Caco-2 (cell line): ENCODE measurements at regions of chr3 and their contacts with region 1.

Region 1: DNA sequence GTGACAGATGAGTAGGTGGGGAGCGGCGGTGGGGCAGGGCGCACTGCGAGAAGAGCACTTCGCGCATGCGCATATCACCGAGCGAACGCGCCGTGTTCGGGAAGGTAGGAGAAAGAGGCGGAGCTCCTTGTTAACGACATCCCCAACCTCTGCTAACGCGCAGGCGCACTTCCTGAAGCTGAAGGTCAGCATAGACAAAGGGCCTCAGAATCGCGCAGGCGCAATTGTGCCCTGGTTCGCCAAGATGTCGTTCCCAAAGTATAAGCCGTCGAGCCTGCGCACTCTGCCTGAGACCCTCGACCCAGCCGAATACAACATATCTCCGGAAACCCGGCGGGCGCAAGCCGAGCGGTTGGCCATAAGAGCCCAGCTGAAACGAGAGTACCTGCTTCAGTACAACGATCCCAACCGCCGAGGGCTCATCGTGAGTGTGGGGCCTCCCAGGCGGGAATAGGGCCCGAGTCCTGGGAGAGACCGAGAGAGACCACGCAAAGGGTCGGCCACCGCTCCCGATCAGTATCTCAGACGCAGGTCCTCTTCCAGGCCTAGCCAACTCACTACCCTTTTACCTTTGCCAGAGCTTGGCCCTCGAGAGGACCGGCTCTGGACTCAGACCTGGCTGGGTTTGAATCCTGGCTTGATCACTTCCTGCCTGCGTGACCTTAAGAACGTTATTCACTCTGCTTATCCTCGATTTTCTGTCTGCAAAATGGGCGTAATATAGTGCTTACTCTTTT is at the start of gene NDUFB4:
- DNase-seq: peak; percentile 95 to 98
- H3K4me3 ChIP-seq: peak within 1 kb of the TSS; percentile 74
- H3K4me3 Mint-ChIP-seq: peak within 1 kb of the TSS; percentile 87
- H3K27ac Mint-ChIP-seq: peak within 1 kb of the TSS; percentile 82
- H3K4me1 ChIP-seq: no peaks in the 10 kb centered on the region
- H3K4me1 Mint-ChIP-seq: no peaks in the 10 kb centered on the region
- H3K27me3 ChIP-seq: no peaks in the 10 kb centered on the region
- H3K27me3 Mint-ChIP-seq: peaks cover 5% of the 10 kb centered on the region
- CTCF ChIP-seq: no peak
- total RNA-seq, gene NDUFB4: 133 and 136 TPM in 2 replicates

Region 2: GRCh38 chr3:120567370-120568201 is 28.7 kb before region 1 on chr3:
- CTCF ChIA-PET with region 1: interaction called, 13 read pairs
- POLR2A ChIA-PET with region 1: no interaction called
- intact Hi-C with region 1: no loop called
- DNase-seq: peak in 1 of 2 experiments; percentile 29
- H3K4me3 ChIP-seq: no peak overlapping the region
- H3K4me3 Mint-ChIP-seq: peak overlapping the region; percentile 63
- H3K27ac Mint-ChIP-seq: peak overlapping the region; percentile 11
- H3K4me1 ChIP-seq: no peaks in the 10 kb centered on the region
- H3K4me1 Mint-ChIP-seq: no peaks in the 10 kb centered on the region
- H3K27me3 ChIP-seq: no peaks in the 10 kb centered on the region
- H3K27me3 Mint-ChIP-seq: no peaks in the 10 kb centered on the region
- CTCF ChIP-seq: peak; percentile 27 to 36

Region 3: GRCh38 chr3:120678331-120678947 is 82.2 kb after region 1 on chr3:
- CTCF ChIA-PET with region 1: no interaction called
- POLR2A ChIA-PET with region 1: interaction called, 8 read pairs
- intact Hi-C with region 1: loop called (anchors 1 kb)
- DNase-seq: peak; percentile 60 to 65
- H3K4me3 ChIP-seq: peak overlapping the region; percentile 17
- H3K4me3 Mint-ChIP-seq: peak overlapping the region; percentile 76
- H3K27ac Mint-ChIP-seq: peak overlapping the region; percentile 93
- H3K4me1 ChIP-seq: peaks cover 46% of the 10 kb centered on the region
- H3K4me1 Mint-ChIP-seq: peaks cover 28% of the 10 kb centered on the region
- H3K27me3 ChIP-seq: no peaks in the 10 kb centered on the region
- H3K27me3 Mint-ChIP-seq: no peaks in the 10 kb centered on the region
- CTCF ChIP-seq: no peak